ENCODE measurements at regions of chr16 and their contacts with region 1.

Region 1: GRCh38 chr16:76381096-76381495 is 103.9 kb downstream of the CNTNAP4 start:
- DNase-seq: no peak
- H3K4me3 ChIP-seq: no peak overlapping the region
- H3K27ac ChIP-seq: no peak overlapping the region
- H3K4me1 ChIP-seq: no peaks in the 10 kb centered on the region
- H3K27me3 ChIP-seq: no peaks in the 10 kb centered on the region
- CTCF ChIP-seq: no peak
- POLR2A ChIP-seq: no peak

Region 2: DNA sequence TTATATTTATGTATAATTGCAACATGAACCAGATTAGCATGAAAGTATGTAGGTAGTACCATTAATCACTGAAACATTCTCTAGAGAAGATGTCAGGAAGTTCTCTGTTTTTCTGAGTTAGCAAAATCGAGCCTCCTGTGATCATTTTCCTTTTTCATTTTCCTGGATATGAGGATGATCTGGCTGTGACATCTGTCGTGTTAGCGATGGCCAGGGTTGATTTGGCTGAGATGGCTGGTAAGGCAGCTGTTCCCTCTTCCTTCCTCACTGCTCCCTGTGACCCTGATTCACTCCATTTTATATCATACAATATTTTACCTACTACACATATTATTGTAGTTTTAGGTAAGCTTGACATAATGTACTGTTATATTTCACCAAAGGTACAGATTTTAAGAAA is 93.6 kb before region 1 on chr16:
- CTCF ChIA-PET with region 1: no interaction called
- POLR2A ChIA-PET with region 1: no interaction called
- dilution Hi-C with region 1: no loop called
- intact Hi-C with region 1: no loop called
- DNase-seq: no peak
- H3K4me3 ChIP-seq: no peak overlapping the region
- H3K27ac ChIP-seq: no peak overlapping the region
- H3K4me1 ChIP-seq: no peaks in the 10 kb centered on the region
- H3K27me3 ChIP-seq: no peaks in the 10 kb centered on the region
- CTCF ChIP-seq: no peak
- POLR2A ChIP-seq: no peak

Region 3: GRCh38 chr16:76345163-76345661 is 35.9 kb before region 1 on chr16:
- CTCF ChIA-PET with region 1: no interaction called
- POLR2A ChIA-PET with region 1: interaction called, 15 read pairs
- dilution Hi-C with region 1: no loop called
- intact Hi-C with region 1: no loop called
- DNase-seq: no peak
- H3K4me3 ChIP-seq: no peak overlapping the region
- H3K27ac ChIP-seq: no peak overlapping the region
- H3K4me1 ChIP-seq: no peaks in the 10 kb centered on the region
- H3K27me3 ChIP-seq: no peaks in the 10 kb centered on the region
- CTCF ChIP-seq: no peak
- POLR2A ChIP-seq: no peak